ENCODE measurements at regions of chr6 and their contacts with region 1.

Region 1: DNA sequence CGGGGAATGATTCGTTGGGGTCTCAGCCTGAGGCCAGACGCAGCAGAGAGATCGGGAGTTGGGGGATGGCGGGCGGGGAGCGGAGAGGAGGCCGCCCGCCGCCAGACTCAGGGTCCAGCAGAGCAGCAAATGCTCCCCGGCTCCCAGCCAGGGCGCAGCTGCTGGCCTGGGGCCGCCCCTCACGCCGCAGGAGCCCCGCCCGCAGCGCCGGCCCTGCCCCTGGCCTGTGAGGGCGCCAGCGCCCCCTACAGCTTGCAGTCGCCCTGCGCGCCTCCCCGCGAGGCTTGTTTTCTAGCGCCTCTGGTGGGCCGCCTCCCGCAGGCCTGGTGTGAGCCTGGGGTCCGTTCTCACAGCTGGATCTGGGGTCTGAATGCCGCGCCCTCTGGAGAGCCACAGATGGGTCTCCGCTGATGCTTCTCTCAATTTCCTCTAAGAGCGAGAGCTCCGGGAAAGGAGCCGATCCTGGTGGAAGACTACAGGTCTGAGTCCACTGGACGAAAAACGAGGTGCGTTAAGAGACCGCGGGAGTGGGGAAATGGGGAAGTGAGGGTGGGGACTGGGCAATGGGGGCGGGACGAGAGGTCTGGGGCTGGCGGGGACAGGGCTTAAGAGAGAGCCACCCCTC is 29.9 kb downstream of the TRIM38 start:
- DNase-seq: peak; percentile 87 to 93 (median 90)
- H3K4me3 ChIP-seq: peak overlapping the region; percentile 98
- H3K4me3 Mint-ChIP-seq: peak overlapping the region; percentile 84 to 95 (median 94)
- H3K27ac ChIP-seq: peak overlapping the region; percentile 81
- H3K27ac Mint-ChIP-seq: peak overlapping the region; percentile 83 to 98 (median 94)
- H3K4me1 ChIP-seq: no peaks in the 10 kb centered on the region
- H3K4me1 Mint-ChIP-seq: peaks cover 18 to 39% (median 22%) of the 10 kb centered on the region in 3 donors
- H3K27me3 ChIP-seq: no peaks in the 10 kb centered on the region
- H3K27me3 Mint-ChIP-seq: peaks cover 0 to 4% of the 10 kb centered on the region in 2 donors

Region 2: GRCh38 chr6:25962149-25963127 is 30.1 kb before region 1 on chr6 and contains the start of gene TRIM38:
- CTCF ChIA-PET with region 1: interaction called, 27 read pairs
- POLR2A ChIA-PET with region 1: interaction called, 6 read pairs
- DNase-seq: peak; percentile 55 to 84 (median 80)
- H3K4me3 ChIP-seq: peak within 1 kb of the TSS; percentile 84
- H3K4me3 Mint-ChIP-seq: peak within 1 kb of the TSS; percentile 93 to 99 (median 97)
- H3K27ac ChIP-seq: peak within 1 kb of the TSS; percentile 94
- H3K27ac Mint-ChIP-seq: peak within 1 kb of the TSS; percentile 91 to 100 (median 99)
- H3K4me1 ChIP-seq: peaks cover 80% of the 10 kb centered on the region
- H3K4me1 Mint-ChIP-seq: peaks cover 77 to 91% (median 90%) of the 10 kb centered on the region in 3 donors
- H3K27me3 ChIP-seq: no peaks in the 10 kb centered on the region
- H3K27me3 Mint-ChIP-seq: no peaks in the 10 kb centered on the region
- total RNA-seq, gene TRIM38: 10.8 to 11.2 TPM

Region 3: DNA sequence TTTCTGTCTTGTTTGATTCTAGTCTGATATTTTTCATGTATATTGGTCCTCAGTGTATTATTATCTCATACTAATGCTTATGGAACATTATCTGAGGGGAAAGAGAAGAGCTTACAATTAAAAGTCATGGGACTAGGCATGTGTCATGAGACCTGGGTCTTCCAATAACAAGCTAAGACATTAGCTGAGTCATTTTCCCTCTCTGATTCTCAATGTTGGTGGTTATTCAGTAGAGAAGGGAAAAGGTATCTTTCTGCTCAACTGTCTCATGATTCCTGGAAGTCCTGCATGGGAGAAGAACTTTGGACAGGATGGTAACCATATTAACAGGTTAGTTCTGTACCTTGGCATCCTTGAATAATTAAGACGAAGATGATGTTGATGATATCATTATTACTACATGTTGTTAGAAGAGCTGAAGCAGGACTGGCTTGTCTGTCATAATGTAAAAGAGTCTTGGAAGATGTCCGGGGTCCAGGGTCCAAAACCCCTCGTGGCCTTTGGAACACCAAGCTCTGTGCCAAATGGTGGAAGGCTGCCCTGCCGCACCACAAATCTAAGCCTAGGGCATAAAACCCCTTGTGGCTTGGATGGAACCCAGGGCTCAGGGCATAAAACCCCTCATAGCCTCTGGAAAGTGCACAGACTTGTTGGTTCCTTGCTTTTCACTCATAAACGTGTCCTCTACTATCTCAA is 10.8 kb before region 1 on chr6:
- CTCF ChIA-PET with region 1: interaction called, 14 read pairs
- POLR2A ChIA-PET with region 1: interaction called, 5 read pairs
- DNase-seq: no peak
- H3K4me3 ChIP-seq: no peak overlapping the region
- H3K4me3 Mint-ChIP-seq: no peak overlapping the region
- H3K27ac ChIP-seq: no peak overlapping the region
- H3K27ac Mint-ChIP-seq: peak overlapping the region in 5 of 8 donors; percentile 15 to 83 (median 53)
- H3K4me1 ChIP-seq: no peaks in the 10 kb centered on the region
- H3K4me1 Mint-ChIP-seq: peaks cover 10 to 30% (median 20%) of the 10 kb centered on the region in 3 donors
- H3K27me3 ChIP-seq: no peaks in the 10 kb centered on the region
- H3K27me3 Mint-ChIP-seq: no peaks in the 10 kb centered on the region

Region 4: GRCh38 chr6:26012061-26012460 is 19.5 kb after region 1 on chr6:
- CTCF ChIA-PET with region 1: interaction called, 100 read pairs
- POLR2A ChIA-PET with region 1: interaction called, 13 read pairs
- DNase-seq: no peak
- H3K4me3 ChIP-seq: no peak overlapping the region
- H3K4me3 Mint-ChIP-seq: no peak overlapping the region
- H3K27ac ChIP-seq: no peak overlapping the region
- H3K27ac Mint-ChIP-seq: no peak overlapping the region
- H3K4me1 ChIP-seq: peaks cover 3% of the 10 kb centered on the region
- H3K4me1 Mint-ChIP-seq: peaks cover 0 to 5% (median under 1%) of the 10 kb centered on the region in 3 donors
- H3K27me3 ChIP-seq: no peaks in the 10 kb centered on the region
- H3K27me3 Mint-ChIP-seq: no peaks in the 10 kb centered on the region

Region 5: GRCh38 chr6:26025894-26026832 is 33.6 kb after region 1 on chr6:
- CTCF ChIA-PET with region 1: interaction called, 88 read pairs
- POLR2A ChIA-PET with region 1: interaction called, 53 read pairs
- DNase-seq: peak; percentile 86 to 95 (median 94)
- H3K4me3 ChIP-seq: peak overlapping the region; percentile 59
- H3K4me3 Mint-ChIP-seq: peak overlapping the region; percentile 85 to 95 (median 93)
- H3K27ac ChIP-seq: peak overlapping the region; percentile 86
- H3K27ac Mint-ChIP-seq: peak overlapping the region; percentile 93 to 100 (median 98)
- H3K4me1 ChIP-seq: peaks cover 21% of the 10 kb centered on the region
- H3K4me1 Mint-ChIP-seq: peaks cover 30 to 77% (median 55%) of the 10 kb centered on the region in 3 donors
- H3K27me3 ChIP-seq: no peaks in the 10 kb centered on the region
- H3K27me3 Mint-ChIP-seq: peaks cover 0 to 9% of the 10 kb centered on the region in 2 donors

Region 6: GRCh38 chr6:26045065-26045927 is 52.8 kb after region 1 on chr6:
- CTCF ChIA-PET with region 1: interaction called, 11 read pairs
- POLR2A ChIA-PET with region 1: interaction called, 3 read pairs
- DNase-seq: peak; percentile 58 to 90 (median 85)
- H3K4me3 ChIP-seq: peak overlapping the region; percentile 77
- H3K4me3 Mint-ChIP-seq: peak overlapping the region; percentile 87 to 94 (median 92)
- H3K27ac ChIP-seq: peak overlapping the region; percentile 71
- H3K27ac Mint-ChIP-seq: peak overlapping the region; percentile 94 to 99 (median 98)
- H3K4me1 ChIP-seq: peaks cover 10% of the 10 kb centered on the region
- H3K4me1 Mint-ChIP-seq: peaks cover 20 to 32% (median 30%) of the 10 kb centered on the region in 3 donors
- H3K27me3 ChIP-seq: no peaks in the 10 kb centered on the region
- H3K27me3 Mint-ChIP-seq: no peaks in the 10 kb centered on the region

Measured in CD8-positive, alpha-beta memory T cell (primary cell).